B cell (primary cell): ENCODE measurements at regions of chr1 and their contacts with region 1.

Region 1: GRCh38 chr1:85319931-85320330 is 43.5 kb upstream of the BCL10 start:
- DNase-seq: no peak
- ATAC-seq: no peak
- H3K4me3 ChIP-seq: no peak overlapping the region
- H3K4me3 Mint-ChIP-seq: no peak overlapping the region
- H3K27ac ChIP-seq: no peak overlapping the region
- H3K27ac Mint-ChIP-seq: no peak overlapping the region
- H3K4me1 ChIP-seq: no peaks in the 10 kb centered on the region
- H3K4me1 Mint-ChIP-seq: no peaks in the 10 kb centered on the region
- H3K27me3 ChIP-seq: no peaks in the 10 kb centered on the region
- H3K27me3 Mint-ChIP-seq: peaks cover 5% of the 10 kb centered on the region
- CTCF ChIP-seq: no peak

Region 2: DNA sequence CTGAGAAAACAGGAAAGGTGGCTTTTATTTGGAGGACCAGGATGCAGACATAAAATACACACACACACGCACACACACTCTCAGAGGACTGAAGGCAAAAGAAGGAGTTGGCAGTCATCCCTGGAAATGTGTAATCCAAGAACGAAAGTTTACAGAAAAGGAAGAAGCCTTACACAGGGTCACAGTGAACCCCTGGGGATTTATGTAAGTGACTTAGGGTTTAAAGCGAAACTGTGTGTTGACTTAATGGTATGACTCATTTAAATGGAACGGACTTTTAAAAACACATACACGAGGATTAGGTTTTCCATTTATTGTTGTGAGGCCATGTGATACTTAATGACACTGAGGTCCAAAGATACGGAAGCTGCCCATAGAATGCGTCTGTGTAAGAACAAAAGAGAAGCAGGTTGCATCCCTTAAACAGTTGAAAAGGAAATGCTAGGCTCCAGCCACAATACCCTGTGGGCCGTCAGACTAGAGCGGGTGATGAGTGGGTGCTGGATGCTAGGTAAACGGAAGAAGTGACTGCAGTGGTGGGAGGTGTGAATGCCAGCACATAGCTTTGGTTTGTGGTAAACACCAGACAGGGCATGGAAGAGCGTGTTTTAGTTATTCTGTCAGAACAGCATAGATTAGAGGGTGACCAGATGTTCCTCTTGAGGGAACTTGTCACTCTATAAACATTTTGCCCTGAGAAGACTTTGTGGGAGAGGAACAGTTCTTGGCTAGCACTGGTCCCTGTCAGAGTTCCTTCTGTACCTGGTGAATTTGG is 21.9 kb before region 1 on chr1:
- CTCF ChIA-PET with region 1: no interaction called
- POLR2A ChIA-PET with region 1: no interaction called
- intact Hi-C with region 1: loop called (anchors 1 kb)
- DNase-seq: peak; percentile 66
- ATAC-seq: peak; percentile 90
- H3K4me3 ChIP-seq: peak overlapping the region in 3 of 5 experiments; percentile 6 to 51 (median 17)
- H3K4me3 Mint-ChIP-seq: peak overlapping the region; percentile 76
- H3K27ac ChIP-seq: peak overlapping the region; percentile 50 to 60
- H3K27ac Mint-ChIP-seq: peak overlapping the region; percentile 78
- H3K4me1 ChIP-seq: peaks cover 19 to 20% of the 10 kb centered on the region in 2 donors
- H3K4me1 Mint-ChIP-seq: peaks cover 26% of the 10 kb centered on the region
- H3K27me3 ChIP-seq: no peaks in the 10 kb centered on the region
- H3K27me3 Mint-ChIP-seq: no peaks in the 10 kb centered on the region
- CTCF ChIP-seq: no peak

Region 3: GRCh38 chr1:85360730-85361493 is 41.0 kb after region 1 on chr1:
- CTCF ChIA-PET with region 1: no interaction called
- POLR2A ChIA-PET with region 1: no interaction called
- intact Hi-C with region 1: no loop called
- DNase-seq: no peak
- ATAC-seq: no peak
- H3K4me3 ChIP-seq: no peak overlapping the region
- H3K4me3 Mint-ChIP-seq: no peak overlapping the region
- H3K27ac ChIP-seq: no peak overlapping the region
- H3K27ac Mint-ChIP-seq: no peak overlapping the region
- H3K4me1 ChIP-seq: no peaks in the 10 kb centered on the region
- H3K4me1 Mint-ChIP-seq: no peaks in the 10 kb centered on the region
- H3K27me3 ChIP-seq: no peaks in the 10 kb centered on the region
- H3K27me3 Mint-ChIP-seq: no peaks in the 10 kb centered on the region
- CTCF ChIP-seq: no peak